ENCODE measurements at regions of chr7 and their contacts with region 1.

Region 1: DNA sequence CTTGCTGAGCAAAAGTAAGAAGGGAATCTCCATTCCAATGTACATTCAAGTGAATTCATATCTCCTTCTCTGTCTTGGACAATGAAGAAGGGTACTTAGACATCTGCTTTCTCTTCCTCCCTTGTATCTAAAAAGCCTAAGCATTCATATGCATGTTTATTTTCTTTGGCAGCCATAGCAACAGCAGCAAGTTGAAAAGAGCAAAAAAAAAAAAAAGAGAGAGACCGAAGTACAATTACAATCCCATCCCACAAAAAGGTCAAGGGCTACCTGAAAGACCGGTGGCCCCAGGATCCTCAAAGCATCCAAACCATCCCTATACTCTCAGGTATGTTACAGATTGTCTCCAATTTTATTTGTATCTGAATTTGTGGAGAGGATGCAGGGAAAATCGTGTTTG is 4.1 kb downstream of the OR2F1 start:
- DNase-seq: no peak
- ATAC-seq: no peak
- H3K4me3 ChIP-seq: no peak overlapping the region
- H3K27ac ChIP-seq: no peak overlapping the region
- H3K4me1 ChIP-seq: no peaks in the 10 kb centered on the region
- H3K27me3 ChIP-seq: peaks cover 0 to 4% (median 0%) of the 10 kb centered on the region in 7 donors
- CTCF ChIP-seq: no peak

Region 2: DNA sequence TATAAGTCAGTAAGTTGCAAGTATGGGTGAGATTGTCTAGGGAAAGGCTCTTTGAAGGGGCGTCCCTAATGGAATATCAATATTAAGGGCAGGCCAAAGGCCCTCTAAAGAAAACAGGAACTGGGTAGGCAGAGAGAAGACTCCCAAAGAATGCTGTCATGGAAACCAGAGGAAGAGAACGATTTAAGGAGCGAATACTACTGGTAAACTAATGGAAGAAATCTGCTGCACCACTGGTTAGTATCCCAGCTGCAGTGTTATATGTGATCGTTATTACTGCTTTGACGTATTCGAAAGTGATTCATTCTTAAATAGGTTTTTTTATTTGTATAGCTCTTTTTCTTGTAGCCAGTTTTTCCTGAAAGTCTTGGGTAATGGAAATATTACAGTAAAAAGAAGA is 669.4 kb before region 1 on chr7:
- intact Hi-C with region 1: no loop called
- DNase-seq: no peak
- ATAC-seq: no peak
- H3K4me3 ChIP-seq: peak overlapping the region; percentile 85 to 100 (median 96)
- H3K27ac ChIP-seq: peak overlapping the region in 8 of 10 donors; percentile 91 to 99 (median 96)
- H3K4me1 ChIP-seq: peaks cover 0 to 56% (median 40%) of the 10 kb centered on the region in 9 donors
- H3K27me3 ChIP-seq: no peaks in the 10 kb centered on the region
- CTCF ChIP-seq: no peak

Region 3: DNA sequence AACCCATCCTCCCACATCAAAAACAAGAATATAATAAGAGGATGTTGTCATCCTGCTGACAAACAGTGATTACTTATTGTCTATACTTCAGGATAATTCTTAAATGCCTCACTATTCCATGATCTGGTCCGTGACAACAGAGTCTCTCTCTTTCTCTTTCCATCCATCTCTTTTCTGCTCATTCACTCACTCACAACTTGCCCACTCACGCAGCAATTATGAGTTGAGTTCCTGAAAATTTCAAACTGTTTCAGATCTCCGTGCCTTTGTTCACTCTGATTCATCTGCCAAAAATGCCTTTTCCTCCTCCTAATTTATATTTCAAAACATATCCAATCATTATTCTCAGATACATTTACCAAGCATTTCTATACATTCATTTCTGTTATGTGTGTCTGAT is 42.8 kb after region 1 on chr7:
- intact Hi-C with region 1: loop called in 1 of 10 experiments (anchors 10 kb)
- DNase-seq: no peak
- ATAC-seq: no peak
- H3K4me3 ChIP-seq: no peak overlapping the region
- H3K27ac ChIP-seq: no peak overlapping the region
- H3K4me1 ChIP-seq: no peaks in the 10 kb centered on the region
- H3K27me3 ChIP-seq: no peaks in the 10 kb centered on the region
- CTCF ChIP-seq: no peak

Measured in heart right ventricle (tissue), 16 donors.